B cell (primary cell): ENCODE measurements at regions of chr22 and their contacts with region 1.

Region 1: GRCh38 chr22:22959147-22959827 is 71.7 kb downstream of the IGLL5 start:
- DNase-seq: peak; percentile 90
- ATAC-seq: peak; percentile 52
- H3K4me3 ChIP-seq: no peak overlapping the region
- H3K4me3 Mint-ChIP-seq: no peak overlapping the region
- H3K27ac ChIP-seq: no peak overlapping the region
- H3K27ac Mint-ChIP-seq: peak overlapping the region; percentile 43
- H3K4me1 ChIP-seq: peaks cover 11 to 18% of the 10 kb centered on the region in 2 donors
- H3K4me1 Mint-ChIP-seq: peaks cover 15% of the 10 kb centered on the region
- H3K27me3 ChIP-seq: no peaks in the 10 kb centered on the region
- H3K27me3 Mint-ChIP-seq: no peaks in the 10 kb centered on the region
- CTCF ChIP-seq: peak; percentile 95

Region 2: GRCh38 chr22:22463855-22464540 is 495.3 kb before region 1 on chr22:
- CTCF ChIA-PET with region 1: interaction called, 10 read pairs
- POLR2A ChIA-PET with region 1: no interaction called
- intact Hi-C with region 1: loop called (anchors 1 kb)
- DNase-seq: peak; percentile 84
- ATAC-seq: peak; percentile 47
- H3K4me3 ChIP-seq: peak overlapping the region in 1 of 5 experiments; percentile 46
- H3K4me3 Mint-ChIP-seq: no peak overlapping the region
- H3K27ac ChIP-seq: no peak overlapping the region
- H3K27ac Mint-ChIP-seq: peak overlapping the region; percentile 16
- H3K4me1 ChIP-seq: peaks cover 13 to 15% of the 10 kb centered on the region in 2 donors
- H3K4me1 Mint-ChIP-seq: peaks cover 19% of the 10 kb centered on the region
- H3K27me3 ChIP-seq: no peaks in the 10 kb centered on the region
- H3K27me3 Mint-ChIP-seq: peaks cover 3% of the 10 kb centered on the region
- CTCF ChIP-seq: peak; percentile 88

Region 3: DNA sequence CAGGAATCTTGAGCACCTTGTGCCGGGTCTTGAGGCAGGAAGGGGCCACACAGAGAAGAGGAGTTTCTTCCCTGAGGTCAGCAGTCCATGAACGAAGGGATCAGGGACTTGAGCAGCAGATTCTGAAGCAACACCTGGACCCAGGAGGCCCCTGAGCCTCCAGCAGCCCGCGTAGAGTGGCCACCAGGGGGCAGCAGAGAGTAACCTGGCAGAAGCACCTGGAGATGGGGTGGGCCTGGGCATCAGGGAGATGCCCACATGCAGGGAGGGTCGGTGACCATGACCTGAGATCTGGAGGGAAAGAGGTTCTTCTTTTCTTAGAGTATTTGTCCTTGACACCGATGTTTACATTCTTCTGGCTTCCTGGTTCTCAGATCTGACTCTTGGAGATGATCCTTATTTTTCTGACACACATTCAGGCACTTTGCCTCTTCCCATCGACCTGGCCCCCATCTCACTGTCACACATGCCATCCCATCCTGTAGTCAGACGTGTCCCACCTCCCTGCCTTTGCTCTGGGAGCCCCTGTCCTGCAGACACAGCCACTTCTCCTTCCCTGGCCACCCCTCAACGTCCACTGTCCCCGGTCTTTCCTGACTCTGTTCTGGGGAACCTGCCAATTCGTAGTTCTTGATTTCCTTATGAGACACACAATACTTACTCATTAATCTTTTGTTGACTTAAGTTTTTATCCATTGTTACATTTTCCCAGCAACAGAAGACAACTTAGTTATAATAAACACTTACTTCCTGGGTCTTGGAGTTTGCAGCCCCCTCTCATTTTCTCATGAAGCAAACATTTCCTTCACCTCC is 248.4 kb before region 1 on chr22:
- CTCF ChIA-PET with region 1: interaction called, 16 read pairs
- POLR2A ChIA-PET with region 1: no interaction called
- intact Hi-C with region 1: no loop called
- DNase-seq: peak; percentile 80
- ATAC-seq: peak; percentile 48
- H3K4me3 ChIP-seq: no peak overlapping the region
- H3K4me3 Mint-ChIP-seq: peak overlapping the region; percentile 23
- H3K27ac ChIP-seq: no peak overlapping the region
- H3K27ac Mint-ChIP-seq: peak overlapping the region; percentile 76
- H3K4me1 ChIP-seq: peaks cover 30 to 53% of the 10 kb centered on the region in 2 donors
- H3K4me1 Mint-ChIP-seq: peaks cover 52% of the 10 kb centered on the region
- H3K27me3 ChIP-seq: peaks cover 0 to 2% (median 0%) of the 10 kb centered on the region in 4 experiments
- H3K27me3 Mint-ChIP-seq: peaks cover 3% of the 10 kb centered on the region
- CTCF ChIP-seq: peak; percentile 89

Region 4: DNA sequence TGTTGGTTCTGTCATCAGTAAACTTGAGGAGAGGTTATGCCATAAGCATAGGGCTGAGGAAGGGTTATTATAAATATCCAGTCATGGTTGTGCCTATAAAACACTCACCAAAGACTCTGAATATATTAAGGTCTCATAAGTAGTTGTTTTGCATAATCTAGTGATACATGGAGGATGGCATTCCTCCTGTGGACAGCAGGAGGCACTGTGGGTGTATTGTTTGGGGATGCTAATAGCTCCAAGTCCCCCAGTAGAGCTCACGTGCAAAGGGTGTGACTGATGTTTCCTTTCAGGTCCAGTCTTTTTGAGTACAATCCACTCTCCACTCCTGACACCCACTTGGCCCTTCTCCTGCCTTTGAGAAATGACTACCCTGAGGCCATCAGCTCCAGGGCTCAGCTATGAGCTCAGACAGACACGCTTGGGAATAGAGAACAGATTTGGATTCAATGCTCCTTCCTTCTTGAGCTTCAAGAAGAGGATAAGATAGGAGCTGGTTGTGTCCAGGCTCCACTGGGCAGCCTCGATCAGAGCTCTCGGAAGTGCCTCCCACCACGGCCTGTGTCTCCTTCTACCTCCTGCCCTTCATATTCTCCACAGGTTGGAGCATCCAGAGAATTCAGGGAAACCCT is 156.8 kb before region 1 on chr22:
- CTCF ChIA-PET with region 1: interaction called, 236 read pairs
- POLR2A ChIA-PET with region 1: no interaction called
- intact Hi-C with region 1: no loop called
- DNase-seq: no peak
- ATAC-seq: no peak
- H3K4me3 ChIP-seq: no peak overlapping the region
- H3K4me3 Mint-ChIP-seq: no peak overlapping the region
- H3K27ac ChIP-seq: no peak overlapping the region
- H3K27ac Mint-ChIP-seq: no peak overlapping the region
- H3K4me1 ChIP-seq: peaks cover 6 to 7% of the 10 kb centered on the region in 2 donors
- H3K4me1 Mint-ChIP-seq: peaks cover 14% of the 10 kb centered on the region
- H3K27me3 ChIP-seq: peaks cover 0 to 7% (median 1%) of the 10 kb centered on the region in 4 experiments
- H3K27me3 Mint-ChIP-seq: peaks cover 21% of the 10 kb centered on the region
- CTCF ChIP-seq: peak; percentile 41

Region 5: GRCh38 chr22:22935546-22936157 is 23.6 kb before region 1 on chr22:
- CTCF ChIA-PET with region 1: interaction called, 117 read pairs
- POLR2A ChIA-PET with region 1: interaction called, 16 read pairs
- intact Hi-C with region 1: loop called (anchors 2 kb)
- DNase-seq: peak; percentile 97
- ATAC-seq: peak; percentile 89
- H3K4me3 ChIP-seq: peak overlapping the region in 2 of 5 experiments; percentile 7 to 37
- H3K4me3 Mint-ChIP-seq: peak overlapping the region; percentile 71
- H3K27ac ChIP-seq: peak overlapping the region; percentile 94 to 99
- H3K27ac Mint-ChIP-seq: peak overlapping the region; percentile 95
- H3K4me1 ChIP-seq: peaks cover 98 to 100% of the 10 kb centered on the region in 2 donors
- H3K4me1 Mint-ChIP-seq: peaks cover 98% of the 10 kb centered on the region
- H3K27me3 ChIP-seq: no peaks in the 10 kb centered on the region
- H3K27me3 Mint-ChIP-seq: no peaks in the 10 kb centered on the region
- CTCF ChIP-seq: peak; percentile 75

Region 6: GRCh38 chr22:23029521-23030228 is 70.4 kb after region 1 on chr22:
- CTCF ChIA-PET with region 1: no interaction called
- POLR2A ChIA-PET with region 1: no interaction called
- intact Hi-C with region 1: no loop called
- DNase-seq: no peak
- ATAC-seq: no peak
- H3K4me3 ChIP-seq: no peak overlapping the region
- H3K4me3 Mint-ChIP-seq: no peak overlapping the region
- H3K27ac ChIP-seq: no peak overlapping the region
- H3K27ac Mint-ChIP-seq: no peak overlapping the region
- H3K4me1 ChIP-seq: peaks cover 7 to 13% of the 10 kb centered on the region in 2 donors
- H3K4me1 Mint-ChIP-seq: peaks cover 20% of the 10 kb centered on the region
- H3K27me3 ChIP-seq: no peaks in the 10 kb centered on the region
- H3K27me3 Mint-ChIP-seq: no peaks in the 10 kb centered on the region
- CTCF ChIP-seq: no peak

Region 7: GRCh38 chr22:23088199-23088604 is 128.9 kb after region 1 on chr22:
- CTCF ChIA-PET with region 1: no interaction called
- POLR2A ChIA-PET with region 1: no interaction called
- intact Hi-C with region 1: no loop called
- DNase-seq: no peak
- ATAC-seq: no peak
- H3K4me3 ChIP-seq: no peak overlapping the region
- H3K4me3 Mint-ChIP-seq: no peak overlapping the region
- H3K27ac ChIP-seq: no peak overlapping the region
- H3K27ac Mint-ChIP-seq: no peak overlapping the region
- H3K4me1 ChIP-seq: peaks cover 27 to 29% of the 10 kb centered on the region in 2 donors
- H3K4me1 Mint-ChIP-seq: peaks cover 24% of the 10 kb centered on the region
- H3K27me3 ChIP-seq: no peaks in the 10 kb centered on the region
- H3K27me3 Mint-ChIP-seq: no peaks in the 10 kb centered on the region
- CTCF ChIP-seq: no peak

Region 8: DNA sequence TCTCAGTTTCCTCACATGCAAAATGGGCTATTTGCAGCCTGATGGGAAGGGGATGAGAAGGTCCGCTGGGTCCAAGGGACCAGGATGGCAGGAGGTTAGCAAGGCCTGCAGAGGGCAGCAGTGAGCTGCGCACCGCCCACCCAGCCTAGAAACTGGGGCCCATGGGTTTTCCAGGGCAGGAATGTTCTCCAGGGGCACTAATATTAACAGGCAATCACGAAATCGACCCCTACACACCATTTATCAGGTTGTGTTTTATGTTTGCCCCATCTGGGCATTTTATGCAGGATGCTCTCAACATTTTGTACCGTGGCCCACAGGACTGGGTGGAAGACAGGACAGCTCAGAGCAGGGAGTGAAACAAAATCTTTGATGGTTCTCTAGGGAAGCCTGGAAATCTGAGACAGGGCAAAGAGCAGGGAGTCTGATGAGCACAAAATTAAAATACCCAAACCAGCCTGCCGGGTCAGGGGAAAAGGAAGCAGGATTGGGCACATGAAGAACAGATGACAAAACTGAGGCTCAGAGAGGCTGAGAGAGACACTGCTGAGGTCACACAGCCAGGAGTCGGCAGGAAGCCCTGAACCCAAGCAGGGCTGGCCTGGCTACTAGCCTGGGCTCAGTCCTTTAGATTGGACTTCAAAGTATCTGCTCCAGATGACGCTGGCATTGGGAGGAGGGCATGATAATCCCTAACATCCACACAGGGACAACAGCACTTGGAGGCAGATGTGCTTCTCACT is 219.4 kb after region 1 on chr22:
- CTCF ChIA-PET with region 1: interaction called, 101 read pairs
- POLR2A ChIA-PET with region 1: no interaction called
- intact Hi-C with region 1: loop called (anchors 1 kb)
- DNase-seq: peak; percentile 78
- ATAC-seq: no peak
- H3K4me3 ChIP-seq: no peak overlapping the region
- H3K4me3 Mint-ChIP-seq: peak overlapping the region; percentile 83
- H3K27ac ChIP-seq: no peak overlapping the region
- H3K27ac Mint-ChIP-seq: peak overlapping the region; percentile 67
- H3K4me1 ChIP-seq: peaks cover 41 to 58% of the 10 kb centered on the region in 2 donors
- H3K4me1 Mint-ChIP-seq: peaks cover 48% of the 10 kb centered on the region
- H3K27me3 ChIP-seq: peaks cover 0 to 11% (median 3%) of the 10 kb centered on the region in 4 experiments
- H3K27me3 Mint-ChIP-seq: peaks cover 7% of the 10 kb centered on the region
- CTCF ChIP-seq: peak; percentile 97

Region 9: GRCh38 chr22:23219822-23220484 is 260.7 kb after region 1 on chr22:
- CTCF ChIA-PET with region 1: no interaction called
- POLR2A ChIA-PET with region 1: no interaction called
- intact Hi-C with region 1: no loop called
- DNase-seq: peak; percentile 65
- ATAC-seq: peak; percentile 83
- H3K4me3 ChIP-seq: peak overlapping the region; percentile 16 to 41 (median 31)
- H3K4me3 Mint-ChIP-seq: peak overlapping the region; percentile 84
- H3K27ac ChIP-seq: peak overlapping the region; percentile 38 to 72
- H3K27ac Mint-ChIP-seq: peak overlapping the region; percentile 93
- H3K4me1 ChIP-seq: peaks cover 70 to 79% of the 10 kb centered on the region in 2 donors
- H3K4me1 Mint-ChIP-seq: peaks cover 82% of the 10 kb centered on the region
- H3K27me3 ChIP-seq: no peaks in the 10 kb centered on the region
- H3K27me3 Mint-ChIP-seq: no peaks in the 10 kb centered on the region
- CTCF ChIP-seq: no peak

Region 10: DNA sequence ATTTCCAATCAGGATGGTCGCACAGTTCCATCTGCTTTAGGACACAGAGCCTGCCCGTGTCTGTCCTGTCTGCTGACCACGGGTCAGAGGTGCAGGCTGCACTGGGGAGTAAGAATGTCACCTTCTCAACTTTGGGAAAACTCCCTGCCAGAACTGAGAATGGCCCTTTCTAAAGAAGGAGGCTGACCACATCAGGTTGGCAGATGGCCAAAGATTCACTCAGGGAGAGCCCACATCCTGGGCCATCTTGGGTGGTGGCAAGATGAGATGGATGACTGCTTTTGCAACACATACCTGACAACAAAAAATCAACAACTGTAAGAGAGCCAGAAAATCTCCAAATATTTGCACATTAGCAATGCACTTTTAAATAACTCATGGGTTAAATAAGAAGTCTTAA is 518.9 kb after region 1 on chr22:
- CTCF ChIA-PET with region 1: no interaction called
- POLR2A ChIA-PET with region 1: no interaction called
- intact Hi-C with region 1: no loop called
- DNase-seq: no peak
- ATAC-seq: no peak
- H3K4me3 ChIP-seq: no peak overlapping the region
- H3K4me3 Mint-ChIP-seq: no peak overlapping the region
- H3K27ac ChIP-seq: no peak overlapping the region
- H3K27ac Mint-ChIP-seq: no peak overlapping the region
- H3K4me1 ChIP-seq: peaks cover 0 to under 1% of the 10 kb centered on the region in 2 donors
- H3K4me1 Mint-ChIP-seq: peaks cover 6% of the 10 kb centered on the region
- H3K27me3 ChIP-seq: peaks cover 0 to 6% (median 0%) of the 10 kb centered on the region in 4 experiments
- H3K27me3 Mint-ChIP-seq: peaks cover 25% of the 10 kb centered on the region
- CTCF ChIP-seq: no peak